GM10248 (cell line): ENCODE measurements at regions of chr5 and their contacts with region 1.

Region 1: GRCh38 chr5:127011961-127012644 is 18.3 kb downstream of the MARCHF3 start:
- DNase-seq: peak; percentile 28
- CTCF ChIP-seq: no peak

Region 2: GRCh38 chr5:126956991-126957390 is 55.1 kb before region 1 on chr5:
- CTCF ChIA-PET with region 1: no interaction called
- POLR2A ChIA-PET with region 1: no interaction called
- DNase-seq: no peak
- CTCF ChIP-seq: no peak

Region 3: GRCh38 chr5:126998201-126998631 is 13.9 kb before region 1 on chr5:
- CTCF ChIA-PET with region 1: interaction called, 13 read pairs
- POLR2A ChIA-PET with region 1: no interaction called
- DNase-seq: peak; percentile 35
- CTCF ChIP-seq: peak; percentile 14

Region 4: GRCh38 chr5:127030259-127031146 is 18.4 kb after region 1 on chr5 and contains the start of gene MARCHF3:
- CTCF ChIA-PET with region 1: interaction called, 32 read pairs
- POLR2A ChIA-PET with region 1: interaction called, 3 read pairs
- DNase-seq: peak; percentile 99
- CTCF ChIP-seq: peak; percentile 22